ENCODE measurements at regions of chr16 and their contacts with region 1.

Region 1: DNA sequence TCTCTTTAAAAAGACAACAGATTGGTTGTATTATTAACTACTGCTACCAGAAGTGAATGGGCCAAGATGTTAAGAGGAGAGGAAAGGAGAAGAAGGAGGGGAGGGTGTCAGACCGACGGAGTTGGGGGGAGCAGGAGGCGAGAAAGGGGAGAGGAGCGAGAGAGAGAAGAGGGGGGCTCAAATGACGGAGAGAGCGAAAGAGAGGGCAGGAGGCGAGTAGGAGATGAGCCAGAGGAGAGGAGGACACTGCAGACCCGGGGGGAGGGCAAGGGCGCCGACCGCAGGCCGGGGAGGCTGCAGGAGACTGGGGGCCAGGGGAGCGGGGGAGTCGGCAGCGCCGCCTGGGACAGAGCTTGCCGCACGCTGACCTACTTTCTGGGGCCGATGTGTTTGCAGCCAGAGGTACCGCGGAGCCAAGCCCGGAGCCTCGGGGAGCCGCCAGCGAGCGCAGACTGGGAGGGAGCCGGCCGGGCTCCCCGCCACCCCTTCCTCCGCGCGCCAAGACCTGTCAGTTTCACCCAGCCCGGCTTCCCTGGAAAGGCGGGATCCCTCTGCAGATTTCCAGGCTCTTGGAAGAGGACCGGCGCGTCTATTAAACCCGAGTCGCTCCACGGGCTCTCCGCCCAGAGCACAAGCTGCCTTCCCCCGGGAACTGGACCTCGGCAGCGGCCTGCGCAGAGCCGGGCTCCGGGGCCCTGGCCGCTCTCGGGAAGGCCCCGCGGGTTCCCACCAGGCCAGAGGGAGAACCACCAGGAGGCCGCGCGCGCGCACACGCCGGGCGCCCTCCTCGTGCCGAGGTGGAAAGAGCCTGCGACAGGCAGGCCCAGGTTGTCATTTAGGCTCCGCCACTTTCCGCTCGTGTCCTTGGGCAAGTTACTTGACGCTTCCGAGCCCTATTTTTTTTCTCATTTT is 74.6 kb downstream of the CMC2 start:
- DNase-seq: peak; percentile 73 to 83 (median 75)
- H3K4me3 ChIP-seq: peak overlapping the region in 2 of 4 donors; percentile 49 to 53
- H3K27ac ChIP-seq: peak overlapping the region; percentile 82 to 97 (median 90)
- H3K4me1 ChIP-seq: peaks cover 7 to 12% of the 10 kb centered on the region in 2 donors
- H3K27me3 ChIP-seq: no peaks in the 10 kb centered on the region
- CTCF ChIP-seq: peak in 3 of 6 experiments; percentile 10 to 18 (median 11)
- POLR2A ChIP-seq: peak; percentile 18 to 64

Region 2: GRCh38 chr16:80639641-80640040 is 292.4 kb before region 1 on chr16:
- intact Hi-C with region 1: no loop called
- DNase-seq: no peak
- H3K4me3 ChIP-seq: no peak overlapping the region
- H3K27ac ChIP-seq: no peak overlapping the region
- H3K4me1 ChIP-seq: no peaks in the 10 kb centered on the region
- H3K27me3 ChIP-seq: no peaks in the 10 kb centered on the region
- CTCF ChIP-seq: no peak
- POLR2A ChIP-seq: no peak

Region 3: GRCh38 chr16:80984124-80984892 is 52.3 kb after region 1 on chr16:
- intact Hi-C with region 1: no loop called
- DNase-seq: no peak
- H3K4me3 ChIP-seq: no peak overlapping the region
- H3K27ac ChIP-seq: no peak overlapping the region
- H3K4me1 ChIP-seq: peaks cover 0 to 8% of the 10 kb centered on the region in 2 donors
- H3K27me3 ChIP-seq: no peaks in the 10 kb centered on the region
- CTCF ChIP-seq: no peak
- POLR2A ChIP-seq: no peak

Region 4: DNA sequence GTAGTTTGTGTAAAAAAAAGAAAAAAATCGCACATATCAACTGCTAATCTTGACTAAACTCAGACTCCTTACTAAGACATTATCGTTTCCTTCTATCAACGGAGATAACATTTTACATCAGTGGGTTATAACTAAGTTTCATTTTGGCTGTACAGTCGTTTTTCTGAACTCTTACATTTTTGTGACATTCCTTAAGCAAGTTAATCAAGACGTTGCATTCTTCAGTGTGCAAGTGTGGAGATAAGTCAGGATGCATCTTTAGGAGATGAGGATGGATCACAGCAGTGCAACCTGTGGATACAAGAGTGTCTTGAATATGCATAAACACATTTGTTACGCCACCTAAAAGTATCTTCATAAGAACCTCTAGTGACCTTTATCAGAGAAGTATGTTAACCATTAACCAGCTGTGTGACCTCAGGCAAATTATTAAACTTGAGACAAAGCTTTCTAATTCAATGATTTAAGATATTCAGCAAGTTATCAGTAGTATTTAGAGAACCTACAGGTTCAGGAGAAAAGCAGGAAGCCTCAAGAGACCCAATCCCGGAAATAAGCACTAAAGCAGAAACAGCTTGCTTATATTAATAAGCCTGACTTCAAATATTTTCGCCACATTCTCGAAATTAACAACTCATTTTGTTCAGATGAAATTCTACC is 65.2 kb after region 1 on chr16:
- intact Hi-C with region 1: loop called (anchors 10 kb)
- DNase-seq: no peak
- H3K4me3 ChIP-seq: peak overlapping the region in 1 of 4 donors; percentile 10
- H3K27ac ChIP-seq: peak overlapping the region in 1 of 5 donors; percentile 3
- H3K4me1 ChIP-seq: peaks cover 0 to 27% of the 10 kb centered on the region in 2 donors
- H3K27me3 ChIP-seq: no peaks in the 10 kb centered on the region
- CTCF ChIP-seq: no peak
- POLR2A ChIP-seq: no peak

Region 5: DNA sequence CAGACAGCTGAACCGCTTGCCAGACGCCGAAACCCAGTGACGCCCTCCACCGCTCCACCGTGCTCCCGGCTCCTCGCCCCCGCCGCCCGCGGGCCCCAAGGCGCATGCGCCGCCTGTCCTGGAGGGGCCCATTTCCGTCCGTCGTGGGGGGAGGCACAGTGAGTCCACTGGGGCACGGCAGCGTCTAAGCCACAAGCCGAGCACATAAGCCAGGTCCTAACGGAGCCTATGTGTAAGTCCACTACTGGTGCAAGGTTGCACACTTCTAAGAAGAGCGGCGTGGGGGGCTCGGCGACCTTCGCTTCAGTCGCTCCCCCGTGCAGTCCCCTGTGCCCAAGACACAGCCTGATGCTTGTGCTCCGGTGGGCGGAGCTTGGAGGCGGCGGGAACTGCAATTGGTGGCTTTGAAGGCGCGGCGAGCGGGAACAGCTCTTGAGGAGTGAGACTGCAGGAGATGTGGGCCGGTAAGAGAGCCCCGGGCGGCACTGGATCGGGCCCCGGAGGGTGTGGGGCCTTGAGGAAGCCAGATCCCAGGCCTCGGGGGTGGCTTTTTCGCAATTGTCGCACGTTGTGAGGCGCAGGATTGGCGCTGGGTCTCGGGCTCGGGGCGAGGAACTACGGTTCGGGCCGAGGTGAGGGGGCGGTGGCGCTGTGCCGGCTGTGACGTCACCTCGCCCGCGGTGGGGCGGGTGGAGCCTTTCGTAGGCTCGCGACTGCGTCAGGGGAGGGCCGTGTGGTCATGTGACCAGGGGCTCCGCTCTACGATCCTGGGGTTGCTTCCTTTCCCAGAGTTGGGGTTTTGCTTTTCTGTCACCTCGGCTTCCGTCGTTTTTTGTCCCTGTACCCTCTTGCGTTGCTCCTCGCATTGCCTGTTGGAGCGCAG is 75.0 kb after region 1 on chr16 and contains the starts of genes CENPN and CMC2:
- intact Hi-C with region 1: loop called in 1 of 2 experiments (anchors 10 kb)
- DNase-seq: peak; percentile 99 to 100 (median 99)
- H3K4me3 ChIP-seq: peak within 1 kb of the TSS; percentile 34 to 83 (median 72)
- H3K27ac ChIP-seq: peak within 1 kb of the TSS; percentile 95 to 99 (median 98)
- H3K4me1 ChIP-seq: peaks cover 12 to 19% of the 10 kb centered on the region in 2 donors
- H3K27me3 ChIP-seq: no peaks in the 10 kb centered on the region
- CTCF ChIP-seq: peak in 2 of 6 experiments; percentile 7 to 12
- POLR2A ChIP-seq: peak; percentile 72 to 86
- total RNA-seq, gene CENPN: 2.2 to 18.9 (median 8.1) TPM
- total RNA-seq, gene CMC2: 36.1 to 170 (median 59.7) TPM